CD4-positive, alpha-beta memory T cell (primary cell): ENCODE measurements at regions of chr9 and their contacts with region 1.

Region 1: DNA sequence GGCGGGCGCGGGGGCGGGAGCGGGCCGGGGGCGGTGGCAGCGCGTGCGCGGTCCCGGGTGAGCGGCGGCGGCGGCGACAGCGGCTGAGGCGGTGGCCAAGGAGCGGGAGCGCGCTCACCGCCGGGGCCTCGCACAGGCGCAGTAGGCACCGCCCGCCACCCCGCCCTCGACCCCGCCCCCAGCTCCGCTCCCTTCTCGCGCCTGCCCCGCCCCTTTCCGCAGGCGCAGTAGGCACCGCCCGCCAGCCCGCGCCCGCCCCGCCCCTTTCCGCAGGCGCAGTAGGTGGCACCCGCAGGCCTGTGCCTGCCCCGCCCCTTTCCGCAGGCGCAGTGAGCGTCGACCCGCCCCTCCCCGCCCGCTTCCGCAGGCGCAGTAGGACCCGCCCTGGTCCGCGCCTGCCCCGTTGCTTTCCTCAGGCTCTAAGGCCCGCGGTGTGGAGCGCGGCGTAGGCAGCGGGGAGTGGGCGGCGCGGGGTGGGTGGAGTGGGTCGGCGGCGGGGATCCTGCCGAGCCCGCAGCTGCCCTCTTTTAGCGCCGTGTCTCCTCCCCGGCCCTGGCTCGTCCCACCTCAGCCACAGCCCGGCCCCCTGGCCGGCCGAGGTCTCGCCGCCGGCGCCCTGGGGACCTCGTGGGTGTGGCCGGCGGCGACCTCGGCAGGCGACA is at the start of gene CAMSAP1:
- DNase-seq: peak; percentile 92 to 95 (median 93)
- H3K4me3 ChIP-seq: peak within 1 kb of the TSS; percentile 33 to 69
- H3K4me3 Mint-ChIP-seq: peak within 1 kb of the TSS; percentile 86 to 94 (median 91)
- H3K27ac ChIP-seq: peak within 1 kb of the TSS; percentile 66
- H3K27ac Mint-ChIP-seq: peak within 1 kb of the TSS; percentile 67 to 95 (median 91)
- H3K4me1 ChIP-seq: peaks cover 44% of the 10 kb centered on the region
- H3K4me1 Mint-ChIP-seq: peaks cover 37 to 67% (median 53%) of the 10 kb centered on the region in 4 donors
- H3K27me3 ChIP-seq: no peaks in the 10 kb centered on the region
- H3K27me3 Mint-ChIP-seq: no peaks in the 10 kb centered on the region
- total RNA-seq, gene CAMSAP1: 40.6 to 51.7 TPM

Region 2: DNA sequence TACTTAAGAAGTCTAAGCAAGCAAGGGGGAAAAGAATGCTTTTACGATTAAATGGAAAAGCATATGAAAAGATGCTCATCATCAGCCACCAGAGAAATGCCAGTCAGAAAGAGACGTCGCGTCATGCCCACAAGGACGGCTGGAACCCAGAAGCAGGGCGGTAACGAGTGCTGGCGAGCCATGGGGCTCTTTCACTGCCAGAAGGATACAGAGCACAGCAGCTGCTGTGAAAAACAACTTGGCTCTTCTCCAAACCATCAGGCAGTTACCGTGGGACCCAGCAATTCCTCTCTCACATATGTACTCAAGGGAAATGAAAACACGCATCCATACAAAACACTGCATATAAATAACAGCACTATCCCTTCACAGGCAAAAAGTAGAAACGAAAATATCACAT is 95.8 kb before region 1 on chr9:
- CTCF ChIA-PET with region 1: no interaction called
- POLR2A ChIA-PET with region 1: no interaction called
- intact Hi-C with region 1: no loop called
- DNase-seq: no peak
- H3K4me3 ChIP-seq: no peak overlapping the region
- H3K4me3 Mint-ChIP-seq: no peak overlapping the region
- H3K27ac ChIP-seq: no peak overlapping the region
- H3K27ac Mint-ChIP-seq: no peak overlapping the region
- H3K4me1 ChIP-seq: no peaks in the 10 kb centered on the region
- H3K4me1 Mint-ChIP-seq: no peaks in the 10 kb centered on the region
- H3K27me3 ChIP-seq: no peaks in the 10 kb centered on the region
- H3K27me3 Mint-ChIP-seq: no peaks in the 10 kb centered on the region

Region 3: DNA sequence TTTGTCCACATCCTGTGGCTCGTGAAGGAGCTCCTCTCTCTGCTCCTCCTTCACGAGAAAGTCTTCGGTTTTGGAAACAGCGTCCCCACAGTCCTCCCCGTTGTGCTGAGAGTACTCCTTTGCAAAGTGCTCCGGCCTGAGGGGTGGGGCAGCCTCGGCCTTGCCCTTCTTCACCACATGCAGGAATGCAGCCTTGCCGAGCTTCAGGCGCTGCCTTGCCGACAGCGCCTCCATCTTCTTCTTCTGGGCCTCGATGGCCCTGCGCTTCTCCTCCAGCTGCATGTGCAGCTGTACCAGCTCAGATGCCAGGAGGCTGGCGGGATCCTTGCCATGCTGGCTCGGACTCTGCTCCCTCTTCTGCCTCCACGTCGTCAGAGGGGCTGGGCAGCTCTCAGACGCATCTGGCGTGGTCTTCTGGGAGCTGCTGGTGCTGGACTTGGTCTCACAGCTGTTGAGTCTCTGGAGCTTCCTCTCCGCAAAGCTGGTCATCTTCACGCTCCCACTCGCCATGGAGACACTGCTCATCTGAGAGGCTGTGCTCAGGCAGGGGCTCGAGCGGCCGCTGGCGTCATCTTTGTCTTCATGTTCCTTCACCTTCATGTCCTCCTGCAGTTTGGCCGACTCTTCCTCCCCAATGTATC is 85.7 kb before region 1 on chr9:
- CTCF ChIA-PET with region 1: no interaction called
- POLR2A ChIA-PET with region 1: no interaction called
- intact Hi-C with region 1: no loop called
- DNase-seq: no peak
- H3K4me3 ChIP-seq: no peak overlapping the region
- H3K4me3 Mint-ChIP-seq: no peak overlapping the region
- H3K27ac ChIP-seq: no peak overlapping the region
- H3K27ac Mint-ChIP-seq: no peak overlapping the region
- H3K4me1 ChIP-seq: no peaks in the 10 kb centered on the region
- H3K4me1 Mint-ChIP-seq: peaks cover 0 to 4% (median 0%) of the 10 kb centered on the region in 4 donors
- H3K27me3 ChIP-seq: no peaks in the 10 kb centered on the region
- H3K27me3 Mint-ChIP-seq: no peaks in the 10 kb centered on the region

Region 4: DNA sequence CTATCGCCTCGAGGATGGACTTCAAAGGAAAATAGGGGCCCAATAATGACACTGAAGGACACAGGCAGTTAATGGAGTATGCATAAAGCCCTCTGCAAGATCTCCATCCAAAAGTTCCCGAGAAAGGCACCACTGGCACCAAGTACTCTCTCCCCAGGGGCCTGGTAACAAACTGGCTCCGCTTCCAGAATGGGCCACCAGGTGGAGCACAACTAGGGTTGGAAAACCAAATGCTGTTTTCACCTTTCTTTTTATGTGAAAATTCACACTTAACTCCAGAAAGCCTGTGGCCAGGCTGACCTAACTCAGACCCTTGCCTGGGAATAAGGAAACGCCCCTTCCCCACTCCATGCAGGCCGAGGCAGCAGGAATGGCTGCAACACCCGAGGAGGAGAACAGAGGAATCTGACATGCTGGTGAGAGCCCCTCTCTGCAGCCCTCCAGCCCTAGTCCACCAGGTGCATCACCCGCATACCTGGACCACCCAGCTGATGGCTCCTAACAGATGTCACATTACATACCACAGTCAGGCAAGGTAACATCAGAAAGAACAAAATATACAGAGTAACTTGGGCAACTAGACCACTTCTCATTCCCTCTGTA is 43.0 kb before region 1 on chr9:
- CTCF ChIA-PET with region 1: interaction called, 4 read pairs
- POLR2A ChIA-PET with region 1: no interaction called
- intact Hi-C with region 1: loop called (anchors 1 kb)
- DNase-seq: peak; percentile 51 to 63 (median 52)
- H3K4me3 ChIP-seq: no peak overlapping the region
- H3K4me3 Mint-ChIP-seq: no peak overlapping the region
- H3K27ac ChIP-seq: no peak overlapping the region
- H3K27ac Mint-ChIP-seq: peak overlapping the region in 3 of 7 donors; percentile 4 to 44 (median 42)
- H3K4me1 ChIP-seq: peaks cover 7% of the 10 kb centered on the region
- H3K4me1 Mint-ChIP-seq: peaks cover 12 to 26% (median 17%) of the 10 kb centered on the region in 4 donors
- H3K27me3 ChIP-seq: no peaks in the 10 kb centered on the region
- H3K27me3 Mint-ChIP-seq: no peaks in the 10 kb centered on the region

Region 5: DNA sequence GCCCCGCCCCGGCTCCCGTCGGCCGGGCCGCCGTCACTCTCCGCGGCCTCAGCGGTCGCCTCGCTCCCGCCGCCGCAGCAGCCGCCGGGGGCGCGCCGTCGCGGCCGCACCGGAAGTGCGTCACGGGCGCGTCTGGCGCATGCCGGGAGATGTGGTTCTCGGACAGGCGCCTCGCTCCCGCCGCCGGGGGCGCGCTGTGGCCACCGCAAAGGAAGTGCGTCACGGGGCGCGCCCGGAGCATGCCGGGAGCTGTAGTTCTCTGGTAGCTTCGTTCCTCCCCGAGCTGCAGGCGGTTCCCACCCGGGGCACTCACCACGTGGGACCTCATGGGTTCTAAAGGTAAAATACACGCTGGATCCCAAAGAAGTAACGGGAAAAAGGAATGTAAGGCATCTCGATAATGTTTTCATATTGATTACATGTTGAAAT is 53.7 kb after region 1 on chr9 and contains the start of gene UBAC1:
- CTCF ChIA-PET with region 1: interaction called, 3 read pairs
- POLR2A ChIA-PET with region 1: interaction called, 23 read pairs
- intact Hi-C with region 1: loop called (anchors 1 kb)
- DNase-seq: peak; percentile 92 to 96 (median 95)
- H3K4me3 ChIP-seq: peak within 1 kb of the TSS; percentile 64 to 69
- H3K4me3 Mint-ChIP-seq: peak within 1 kb of the TSS; percentile 83 to 91 (median 86)
- H3K27ac ChIP-seq: peak within 1 kb of the TSS; percentile 65
- H3K27ac Mint-ChIP-seq: peak within 1 kb of the TSS; percentile 82 to 93 (median 92)
- H3K4me1 ChIP-seq: peaks cover 21% of the 10 kb centered on the region
- H3K4me1 Mint-ChIP-seq: peaks cover 10 to 42% (median 21%) of the 10 kb centered on the region in 4 donors
- H3K27me3 ChIP-seq: no peaks in the 10 kb centered on the region
- H3K27me3 Mint-ChIP-seq: peaks cover 2 to 4% of the 10 kb centered on the region in 2 donors
- total RNA-seq, gene UBAC1: 28.4 to 32.8 TPM